ENCODE measurements at regions of chr1 and their contacts with region 1.

Region 1: GRCh38 chr1:231240883-231241735 is at the start of gene GNPAT:
- DNase-seq: peak; percentile 95
- total RNA-seq, gene GNPAT: 49.0 TPM

Region 2: GRCh38 chr1:230090194-230090711 is 1150.9 kb before region 1 on chr1:
- intact Hi-C with region 1: no loop called
- DNase-seq: no peak

Region 3: DNA sequence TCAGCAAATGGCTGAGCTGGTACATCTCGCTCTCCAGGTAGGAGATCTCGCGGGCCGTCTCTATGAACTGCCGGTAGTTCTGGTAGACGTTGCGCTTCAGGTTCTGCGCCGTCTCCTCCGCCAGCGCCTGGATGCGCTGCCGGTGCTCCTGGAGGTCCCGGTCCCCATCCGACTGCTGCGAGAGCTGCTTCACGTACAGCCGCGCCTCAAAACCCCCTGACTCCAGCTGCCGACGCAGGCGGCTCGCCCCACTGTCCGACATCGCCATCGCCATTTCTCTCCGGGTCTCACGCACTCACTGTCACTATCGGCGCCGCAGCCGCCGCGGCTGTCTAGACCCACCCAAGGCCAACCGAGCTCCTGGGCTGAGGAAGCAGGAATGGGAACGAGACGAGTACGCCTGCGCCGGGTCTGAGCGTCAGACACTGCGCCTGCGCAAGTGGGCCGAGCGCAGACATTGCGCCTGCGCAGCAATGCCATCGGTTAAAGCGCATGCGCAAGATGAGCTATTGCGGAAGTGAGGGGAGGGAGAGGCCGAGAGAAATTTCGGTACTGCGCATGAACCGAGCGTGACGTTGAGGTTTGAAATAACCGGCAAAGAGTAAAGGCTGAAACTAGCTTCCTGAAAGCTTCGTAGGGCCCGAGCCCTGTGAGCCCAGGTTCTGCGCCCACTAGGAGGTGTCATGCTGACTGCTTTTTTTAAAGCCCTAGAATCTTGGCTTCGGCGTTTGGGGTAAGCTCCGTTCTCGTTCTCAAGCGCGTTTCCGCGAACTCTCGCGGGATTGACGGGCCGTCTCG is 96.6 kb after region 1 on chr1 and contains the start of gene EXOC8:
- intact Hi-C with region 1: loop called (anchors 5 kb)
- DNase-seq: peak; percentile 98
- total RNA-seq, gene EXOC8: 11.5 TPM